OCI-LY7 (cell line): ENCODE measurements at regions of chr9 and their contacts with region 1.

Region 1: GRCh38 chr9:94554439-94555391 is at the start of gene PCAT7:
- DNase-seq: peak; percentile 89
- H3K4me3 ChIP-seq: peak within 1 kb of the TSS; percentile 82
- H3K27ac ChIP-seq: peak within 1 kb of the TSS; percentile 77
- H3K4me1 ChIP-seq: peaks cover 13% of the 10 kb centered on the region
- CTCF ChIP-seq: peak; percentile 77
- total RNA-seq, gene PCAT7: 1.8 and 2.9 TPM in 2 replicates

Region 2: GRCh38 chr9:94603259-94604160 is 48.8 kb after region 1 on chr9:
- CTCF ChIA-PET with region 1: interaction called, 4 read pairs
- POLR2A ChIA-PET with region 1: interaction called, 6 read pairs
- intact Hi-C with region 1: loop called (anchors 1 kb)
- DNase-seq: peak; percentile 84
- H3K4me3 ChIP-seq: peak overlapping the region; percentile 75
- H3K27ac ChIP-seq: peak overlapping the region; percentile 93
- H3K4me1 ChIP-seq: peaks cover 82% of the 10 kb centered on the region
- CTCF ChIP-seq: peak; percentile 83

Region 3: DNA sequence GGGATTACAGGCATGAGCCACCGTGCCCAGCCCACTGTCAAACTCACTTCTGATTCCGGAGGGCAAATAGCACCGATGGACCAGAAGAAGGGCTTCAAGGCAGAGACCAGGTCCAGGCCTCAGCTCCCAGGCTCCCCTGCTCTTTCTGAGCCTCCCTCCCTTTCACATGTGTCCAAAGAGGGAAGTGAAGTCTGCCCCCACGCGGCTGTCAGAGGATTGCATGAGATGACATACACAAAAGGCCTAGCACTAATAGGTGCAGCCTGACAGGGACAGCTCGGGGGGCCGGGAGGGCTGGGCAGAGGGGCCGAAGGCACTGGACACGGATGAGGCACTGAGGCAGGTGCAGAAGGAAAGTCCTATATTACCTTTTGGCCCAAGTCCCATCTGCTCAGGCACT is 68.5 kb after region 1 on chr9:
- CTCF ChIA-PET with region 1: interaction called, 7 read pairs
- POLR2A ChIA-PET with region 1: interaction called, 5 read pairs
- intact Hi-C with region 1: loop called (anchors 1 kb)
- DNase-seq: peak; percentile 83
- H3K4me3 ChIP-seq: no peak overlapping the region
- H3K27ac ChIP-seq: no peak overlapping the region
- H3K4me1 ChIP-seq: peaks cover 6% of the 10 kb centered on the region
- CTCF ChIP-seq: peak; percentile 80

Region 4: DNA sequence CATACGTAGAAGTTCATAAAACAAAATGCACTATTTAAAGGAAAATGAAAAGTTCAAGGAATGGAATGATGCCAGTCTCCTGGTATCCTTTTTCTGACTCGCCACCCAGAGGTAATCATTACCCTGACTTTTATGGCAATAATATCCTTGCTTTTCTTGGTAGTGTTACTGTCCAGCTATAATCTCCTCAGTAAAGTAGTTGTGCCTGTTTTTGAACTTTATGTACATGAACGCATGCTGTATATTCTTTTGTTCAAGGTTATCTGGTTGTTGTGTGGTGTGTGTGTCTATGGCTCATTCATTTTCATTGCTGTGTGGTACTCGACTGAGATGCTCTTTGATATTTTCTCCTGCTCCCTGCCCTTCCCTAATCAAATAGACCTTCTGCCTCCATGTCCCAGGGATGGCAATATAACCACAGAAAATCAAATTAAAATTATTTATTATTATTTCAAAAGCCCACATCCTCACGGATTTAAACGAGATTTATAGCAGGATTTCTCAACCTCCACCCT is 113.8 kb after region 1 on chr9:
- CTCF ChIA-PET with region 1: no interaction called
- POLR2A ChIA-PET with region 1: no interaction called
- intact Hi-C with region 1: loop called (anchors 2 kb)
- DNase-seq: no peak
- H3K4me3 ChIP-seq: no peak overlapping the region
- H3K27ac ChIP-seq: no peak overlapping the region
- H3K4me1 ChIP-seq: peaks cover 9% of the 10 kb centered on the region
- CTCF ChIP-seq: no peak

Region 5: GRCh38 chr9:94692601-94693000 is 137.9 kb after region 1 on chr9:
- CTCF ChIA-PET with region 1: no interaction called
- POLR2A ChIA-PET with region 1: no interaction called
- intact Hi-C with region 1: no loop called
- DNase-seq: no peak
- H3K4me3 ChIP-seq: no peak overlapping the region
- H3K27ac ChIP-seq: no peak overlapping the region
- H3K4me1 ChIP-seq: no peaks in the 10 kb centered on the region
- CTCF ChIP-seq: no peak

Region 6: DNA sequence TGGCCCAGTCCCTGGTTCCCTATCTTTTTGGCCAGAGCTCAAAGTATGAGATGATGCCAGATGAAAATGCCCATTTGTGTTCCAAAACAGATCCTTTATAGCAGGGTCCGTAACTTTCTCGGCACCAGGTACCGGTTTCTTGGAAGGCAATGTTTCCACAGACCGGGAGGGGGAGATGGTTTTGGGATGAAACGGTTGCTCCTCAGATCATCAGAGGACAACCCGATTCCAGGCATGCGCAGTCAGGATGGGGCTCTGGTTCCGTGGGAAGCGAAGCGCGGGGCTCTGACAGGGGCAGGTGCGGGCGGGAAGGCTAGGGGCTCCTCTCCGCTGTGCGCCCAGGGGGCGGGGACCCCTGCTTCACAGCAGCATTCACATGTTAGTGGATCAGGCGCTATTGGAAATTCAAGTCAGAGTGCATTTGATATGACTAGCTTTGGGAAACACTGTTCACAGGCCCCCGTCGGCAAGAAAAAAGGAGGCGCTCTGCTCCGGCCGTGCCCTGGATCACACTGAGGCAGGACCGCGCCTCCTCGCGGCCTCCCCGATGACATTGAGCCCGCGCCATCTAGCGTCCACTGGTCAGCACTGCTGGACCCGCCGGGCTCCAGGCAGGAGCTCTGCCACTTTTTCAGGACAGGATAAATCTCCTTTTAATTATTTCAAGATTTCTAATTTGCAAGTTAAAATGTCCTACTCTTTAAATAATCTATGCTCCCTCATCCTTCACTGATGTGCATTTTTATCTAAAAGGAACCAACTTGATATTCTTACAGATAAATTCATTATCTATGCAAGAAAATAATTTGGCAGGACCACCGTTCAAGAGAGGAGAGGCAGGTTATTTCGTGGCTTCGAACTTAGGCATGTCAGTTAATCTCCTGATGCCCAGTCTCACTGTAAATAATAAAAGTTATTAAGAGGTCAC is 572.8 kb after region 1 on chr9:
- CTCF ChIA-PET with region 1: no interaction called
- POLR2A ChIA-PET with region 1: no interaction called
- intact Hi-C with region 1: no loop called
- DNase-seq: peak; percentile 62
- H3K4me3 ChIP-seq: no peak overlapping the region
- H3K27ac ChIP-seq: no peak overlapping the region
- H3K4me1 ChIP-seq: no peaks in the 10 kb centered on the region
- CTCF ChIP-seq: peak; percentile 85

Region 7: GRCh38 chr9:95574176-95574575 is 1019.5 kb after region 1 on chr9:
- CTCF ChIA-PET with region 1: no interaction called
- POLR2A ChIA-PET with region 1: no interaction called
- intact Hi-C with region 1: no loop called
- DNase-seq: peak; percentile 45
- H3K4me3 ChIP-seq: no peak overlapping the region
- H3K27ac ChIP-seq: no peak overlapping the region
- H3K4me1 ChIP-seq: no peaks in the 10 kb centered on the region
- CTCF ChIP-seq: peak; percentile 62